ENCODE measurements at regions of chr19 and their contacts with region 1.

Region 1: GRCh38 chr19:16185123-16185767 is at the start of gene FAM32A:
- H3K4me3 ChIP-seq: peak within 1 kb of the TSS; percentile 79
- H3K27ac ChIP-seq: peak within 1 kb of the TSS; percentile 48
- H3K4me1 ChIP-seq: no peaks in the 10 kb centered on the region
- CTCF ChIP-seq: no peak

Region 2: GRCh38 chr19:16197622-16198369 is 12.6 kb after region 1 on chr19 and contains the start of gene AP1M1:
- CTCF ChIA-PET with region 1: interaction called, 6 read pairs
- POLR2A ChIA-PET with region 1: interaction called, 27 read pairs
- H3K4me3 ChIP-seq: peak within 1 kb of the TSS; percentile 78
- H3K27ac ChIP-seq: peak within 1 kb of the TSS; percentile 53
- H3K4me1 ChIP-seq: peaks cover 5% of the 10 kb centered on the region; the same call in 1 of the 2 replicates
- CTCF ChIP-seq: no peak

Region 3: DNA sequence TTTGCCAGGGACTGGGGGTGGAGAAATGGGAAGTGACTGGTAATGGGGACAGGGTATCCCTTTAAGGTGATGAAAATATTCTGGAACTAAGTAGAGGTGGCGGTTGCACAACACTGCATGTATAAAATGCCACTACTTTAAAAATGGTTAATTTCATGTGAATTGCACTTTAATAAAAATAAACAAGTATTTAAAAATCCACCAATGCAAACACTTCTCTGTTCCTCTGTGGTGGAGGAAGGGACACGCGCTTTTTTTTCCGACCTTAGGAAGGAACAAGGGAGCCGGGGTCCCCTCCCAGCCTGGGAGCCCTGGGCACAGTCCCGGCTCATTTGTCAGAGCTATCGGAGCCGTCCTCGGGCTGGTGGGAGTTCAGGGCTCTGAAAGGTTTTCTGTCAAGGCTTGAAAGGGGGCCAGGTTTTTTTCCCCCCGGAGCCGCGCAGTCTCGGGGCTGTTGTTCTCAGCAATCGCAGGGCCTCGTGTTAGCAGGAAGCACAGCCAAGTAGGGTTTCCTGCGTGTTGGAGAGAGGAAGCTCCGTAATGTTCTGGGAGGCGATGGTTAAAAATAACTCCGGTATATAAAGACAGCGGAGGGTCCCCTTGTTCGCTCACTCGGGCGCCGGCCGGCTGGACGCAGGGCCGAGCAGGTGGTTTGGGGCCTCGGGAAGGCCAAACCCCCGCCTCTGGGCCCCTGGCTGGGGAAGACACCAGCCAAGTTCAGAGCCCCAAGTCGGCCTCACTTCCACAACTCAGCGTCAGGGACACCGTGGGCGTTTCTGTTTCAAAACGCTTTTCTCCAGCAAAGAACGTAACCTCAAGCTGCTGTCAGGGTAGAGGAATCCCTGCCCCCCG is 98.2 kb after region 1 on chr19:
- CTCF ChIA-PET with region 1: no interaction called
- POLR2A ChIA-PET with region 1: no interaction called
- H3K4me3 ChIP-seq: no peak overlapping the region
- H3K27ac ChIP-seq: no peak overlapping the region
- H3K4me1 ChIP-seq: no peaks in the 10 kb centered on the region; the same call in 1 of the 2 replicates
- CTCF ChIP-seq: no peak

Region 4: GRCh38 chr19:16721051-16721450 is 535.8 kb after region 1 on chr19:
- CTCF ChIA-PET with region 1: no interaction called
- POLR2A ChIA-PET with region 1: no interaction called
- H3K4me3 ChIP-seq: no peak overlapping the region
- H3K27ac ChIP-seq: no peak overlapping the region
- H3K4me1 ChIP-seq: no peaks in the 10 kb centered on the region
- CTCF ChIP-seq: no peak

Measured in HEK293 (cell line).